Activated CD4-positive, alpha-beta T cell treated with anti-CD3 and anti-CD28 coated beads for 36 hours (primary cell): ENCODE measurements at regions of chr17 and their contacts with region 1.

Region 1: GRCh38 chr17:49677933-49678847 is at the start of gene SPOP:
- DNase-seq: peak; percentile 100
- ATAC-seq: peak; percentile 96
- H3K4me3 Mint-ChIP-seq: peak within 1 kb of the TSS; percentile 95
- H3K27ac Mint-ChIP-seq: peak within 1 kb of the TSS; percentile 96
- H3K4me1 Mint-ChIP-seq: peaks cover 39% of the 10 kb centered on the region
- H3K27me3 Mint-ChIP-seq: no peaks in the 10 kb centered on the region
- total RNA-seq, gene SPOP: 57.0 to 64.6 TPM

Region 2: DNA sequence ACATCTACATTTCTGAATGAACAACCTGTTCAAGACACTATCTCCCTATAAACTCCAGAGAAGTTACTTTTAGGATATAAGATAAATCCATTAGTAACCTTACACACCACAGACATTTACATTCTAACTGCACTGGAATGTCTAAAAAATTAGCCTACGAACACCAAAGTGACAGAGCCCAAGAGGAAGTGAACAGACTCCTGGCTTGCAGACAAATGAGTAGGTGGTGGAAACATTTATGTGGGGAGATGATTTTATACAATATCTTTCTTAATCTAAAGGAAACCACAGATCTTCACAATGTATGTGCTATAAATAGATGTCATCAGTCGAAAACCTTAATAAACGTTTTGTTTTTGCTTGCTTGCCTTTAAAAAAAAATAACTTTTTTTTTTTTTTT is 334.9 kb before region 1 on chr17:
- CTCF ChIA-PET with region 1: no interaction called
- POLR2A ChIA-PET with region 1: no interaction called
- intact Hi-C with region 1: loop called in 1 of 2 experiments (anchors 1 kb)
- DNase-seq: peak; percentile 38
- ATAC-seq: peak; percentile 70
- H3K4me3 Mint-ChIP-seq: peak overlapping the region; percentile 55
- H3K27ac Mint-ChIP-seq: peak overlapping the region; percentile 71
- H3K4me1 Mint-ChIP-seq: peaks cover 64% of the 10 kb centered on the region
- H3K27me3 Mint-ChIP-seq: peaks cover 2% of the 10 kb centered on the region

Region 3: GRCh38 chr17:49414622-49415350 is 263.4 kb before region 1 on chr17 and contains the start of gene PHB1:
- CTCF ChIA-PET with region 1: interaction called, 3 read pairs
- POLR2A ChIA-PET with region 1: no interaction called
- intact Hi-C with region 1: loop called in 1 of 2 experiments (anchors 1 kb)
- DNase-seq: peak; percentile 98
- ATAC-seq: peak; percentile 100
- H3K4me3 Mint-ChIP-seq: peak within 1 kb of the TSS; percentile 100
- H3K27ac Mint-ChIP-seq: peak within 1 kb of the TSS; percentile 95
- H3K4me1 Mint-ChIP-seq: peaks cover 32% of the 10 kb centered on the region
- H3K27me3 Mint-ChIP-seq: no peaks in the 10 kb centered on the region
- total RNA-seq, gene PHB1: 346 to 350 TPM

Region 4: GRCh38 chr17:49637050-49637449 is 41.1 kb before region 1 on chr17:
- CTCF ChIA-PET with region 1: interaction called, 3 read pairs
- POLR2A ChIA-PET with region 1: no interaction called
- intact Hi-C with region 1: loop called in 1 of 2 experiments (anchors 5 kb)
- DNase-seq: no peak
- ATAC-seq: no peak
- H3K4me3 Mint-ChIP-seq: no peak overlapping the region
- H3K27ac Mint-ChIP-seq: peak overlapping the region; percentile 31
- H3K4me1 Mint-ChIP-seq: peaks cover 47% of the 10 kb centered on the region
- H3K27me3 Mint-ChIP-seq: no peaks in the 10 kb centered on the region

Region 5: DNA sequence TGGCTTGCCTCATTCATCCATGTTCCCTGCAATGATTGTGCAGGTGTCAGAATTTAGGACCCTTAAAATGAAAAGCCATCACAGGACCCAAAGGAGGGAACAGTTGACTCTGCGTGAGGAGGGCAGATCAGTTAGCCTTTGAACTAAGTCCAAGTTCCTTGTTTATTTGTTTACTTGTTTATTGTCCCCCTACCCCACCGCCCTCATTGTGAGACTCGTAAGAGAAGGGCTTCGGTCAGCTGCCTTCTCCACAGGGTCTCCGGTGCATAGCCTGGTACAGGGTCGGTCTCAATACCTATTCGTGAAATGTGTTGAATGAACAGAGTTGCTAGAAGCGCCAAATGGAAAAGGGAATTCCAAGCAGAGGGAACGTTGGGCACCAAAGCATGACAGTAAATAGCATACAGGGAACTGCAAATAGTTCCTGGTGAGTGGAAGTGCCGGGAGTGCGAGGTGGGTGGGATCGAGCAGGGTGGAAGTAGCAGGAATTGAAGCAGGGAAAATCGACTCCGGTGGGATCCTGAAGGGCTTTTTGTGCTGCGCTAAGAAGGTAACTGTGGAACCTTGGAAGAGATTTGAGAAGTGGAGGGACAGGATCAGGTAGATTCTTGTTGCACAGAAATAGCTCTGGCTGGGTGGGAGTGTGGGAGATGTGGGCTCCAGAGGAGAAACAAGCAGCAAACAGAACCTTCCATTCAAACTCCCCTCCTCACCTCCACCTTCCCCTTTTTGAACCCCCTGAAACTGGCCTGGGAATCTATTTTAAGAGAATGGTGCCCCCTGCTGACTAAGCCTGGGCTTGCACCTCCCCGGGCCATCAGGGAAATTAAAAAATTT is 16.9 kb after region 1 on chr17:
- CTCF ChIA-PET with region 1: interaction called, 28 read pairs
- POLR2A ChIA-PET with region 1: interaction called, 8 read pairs
- intact Hi-C with region 1: loop called in 1 of 2 experiments (anchors 1 kb)
- DNase-seq: peak; percentile 85
- ATAC-seq: no peak
- H3K4me3 Mint-ChIP-seq: no peak overlapping the region
- H3K27ac Mint-ChIP-seq: peak overlapping the region; percentile 90
- H3K4me1 Mint-ChIP-seq: peaks cover 36% of the 10 kb centered on the region
- H3K27me3 Mint-ChIP-seq: no peaks in the 10 kb centered on the region

Region 6: DNA sequence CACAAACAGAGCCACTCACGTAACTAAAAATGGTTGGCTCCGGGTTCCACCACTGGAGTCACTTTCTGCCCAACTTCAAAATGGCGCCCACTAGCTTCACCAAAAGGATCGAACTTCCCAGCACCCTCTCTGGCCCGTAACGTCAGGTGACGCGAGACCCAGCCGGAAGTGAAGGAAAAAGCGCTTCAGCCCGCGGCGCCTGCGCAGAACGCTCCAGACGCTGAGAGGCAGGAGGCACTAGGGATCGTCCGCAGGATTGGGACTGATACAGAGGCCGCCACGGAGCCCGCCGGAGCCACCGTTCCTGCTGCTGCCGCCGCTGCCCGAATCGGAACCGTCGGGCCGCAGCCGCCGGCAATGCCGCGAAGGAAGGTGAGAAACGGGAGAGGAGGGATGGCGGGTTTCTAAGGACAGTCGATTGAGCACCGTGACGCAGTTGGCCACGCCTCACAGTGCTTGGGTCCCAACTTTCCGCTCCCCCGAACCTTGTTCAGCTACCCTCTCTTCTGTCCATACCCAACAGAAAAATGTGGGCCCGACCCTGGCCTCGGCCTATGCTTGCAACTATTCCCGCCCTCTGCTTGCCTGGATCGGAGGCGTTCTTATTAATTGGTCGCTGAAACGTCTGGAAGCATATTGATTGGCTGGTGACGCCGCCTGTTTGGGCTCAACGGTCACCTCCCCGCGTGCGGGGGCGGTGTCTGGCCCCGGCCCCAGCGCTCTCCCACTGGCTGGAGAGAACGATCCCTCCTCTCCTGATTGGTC is 110.5 kb after region 1 on chr17 and contains the start of gene KAT7:
- CTCF ChIA-PET with region 1: no interaction called
- POLR2A ChIA-PET with region 1: no interaction called
- intact Hi-C with region 1: loop called (anchors 1 kb)
- DNase-seq: peak; percentile 99
- ATAC-seq: peak; percentile 91
- H3K4me3 Mint-ChIP-seq: peak within 1 kb of the TSS; percentile 89
- H3K27ac Mint-ChIP-seq: peak within 1 kb of the TSS; percentile 98
- H3K4me1 Mint-ChIP-seq: peaks cover 53% of the 10 kb centered on the region
- H3K27me3 Mint-ChIP-seq: no peaks in the 10 kb centered on the region
- total RNA-seq, gene KAT7: 63.5 to 93.0 TPM

Region 7: GRCh38 chr17:49968380-49969133 is 290.4 kb after region 1 on chr17:
- CTCF ChIA-PET with region 1: no interaction called
- POLR2A ChIA-PET with region 1: no interaction called
- intact Hi-C with region 1: no loop called
- DNase-seq: peak; percentile 85
- ATAC-seq: peak; percentile 83
- H3K4me3 Mint-ChIP-seq: peak overlapping the region; percentile 82
- H3K27ac Mint-ChIP-seq: peak overlapping the region; percentile 61
- H3K4me1 Mint-ChIP-seq: peaks cover 34% of the 10 kb centered on the region
- H3K27me3 Mint-ChIP-seq: peaks cover 70% of the 10 kb centered on the region

Region 8: GRCh38 chr17:50345432-50346312 is 667.5 kb after region 1 on chr17 and contains the start of gene XYLT2:
- CTCF ChIA-PET with region 1: no interaction called
- POLR2A ChIA-PET with region 1: no interaction called
- intact Hi-C with region 1: loop called in 1 of 2 experiments (anchors 2 kb)
- DNase-seq: peak; percentile 95
- ATAC-seq: peak; percentile 91
- H3K4me3 Mint-ChIP-seq: peak within 1 kb of the TSS; percentile 90
- H3K27ac Mint-ChIP-seq: peak within 1 kb of the TSS; percentile 94
- H3K4me1 Mint-ChIP-seq: peaks cover 32% of the 10 kb centered on the region
- H3K27me3 Mint-ChIP-seq: no peaks in the 10 kb centered on the region
- total RNA-seq, gene XYLT2: 29.8 to 30.4 TPM